GM18951 (cell line): ENCODE measurements at regions of chr4 and their contacts with region 1.

Region 1: GRCh38 chr4:26076000-26076587 is 162.1 kb downstream of the SMIM20 start:
- POLR2A ChIP-seq: no peak

Region 2: GRCh38 chr4:25535278-25535677 is 540.8 kb before region 1 on chr4:
- in situ Hi-C with region 1: no loop called
- POLR2A ChIP-seq: no peak

Region 3: GRCh38 chr4:26320538-26321325 is 244.6 kb after region 1 on chr4 and contains the start of gene RBPJ:
- in situ Hi-C with region 1: loop called (anchors 10 kb)
- POLR2A ChIP-seq: peak; percentile 60

Region 4: GRCh38 chr4:26529479-26529878 is 453.4 kb after region 1 on chr4:
- in situ Hi-C with region 1: no loop called
- POLR2A ChIP-seq: no peak